Endothelial cell of umbilical vein (primary cell): ENCODE measurements at regions of chr9 and their contacts with region 1.

Region 1: GRCh38 chr9:22469928-22470544 is 23.4 kb downstream of the DMRTA1 start:
- DNase-seq: peak; percentile 58
- H3K4me3 ChIP-seq: no peak overlapping the region
- H3K27ac ChIP-seq: no peak overlapping the region
- H3K4me1 ChIP-seq: no peaks in the 10 kb centered on the region
- H3K27me3 ChIP-seq: peaks cover 0 to 10% of the 10 kb centered on the region in 2 experiments
- CTCF ChIP-seq: peak; percentile 65 to 69
- POLR2A ChIP-seq: no peak

Region 2: GRCh38 chr9:22079873-22080341 is 390.1 kb before region 1 on chr9:
- CTCF ChIA-PET with region 1: no interaction called
- POLR2A ChIA-PET with region 1: no interaction called
- dilution Hi-C with region 1: no loop called
- intact Hi-C with region 1: no loop called
- DNase-seq: no peak
- H3K4me3 ChIP-seq: no peak overlapping the region
- H3K27ac ChIP-seq: no peak overlapping the region
- H3K4me1 ChIP-seq: peaks cover 7% of the 10 kb centered on the region
- H3K27me3 ChIP-seq: no peaks in the 10 kb centered on the region
- CTCF ChIP-seq: no peak
- POLR2A ChIP-seq: no peak

Region 3: GRCh38 chr9:22278426-22278825 is 191.6 kb before region 1 on chr9:
- CTCF ChIA-PET with region 1: no interaction called
- POLR2A ChIA-PET with region 1: no interaction called
- dilution Hi-C with region 1: no loop called
- intact Hi-C with region 1: no loop called
- DNase-seq: no peak
- H3K4me3 ChIP-seq: no peak overlapping the region
- H3K27ac ChIP-seq: no peak overlapping the region
- H3K4me1 ChIP-seq: no peaks in the 10 kb centered on the region
- H3K27me3 ChIP-seq: no peaks in the 10 kb centered on the region
- CTCF ChIP-seq: no peak
- POLR2A ChIP-seq: no peak

Region 4: DNA sequence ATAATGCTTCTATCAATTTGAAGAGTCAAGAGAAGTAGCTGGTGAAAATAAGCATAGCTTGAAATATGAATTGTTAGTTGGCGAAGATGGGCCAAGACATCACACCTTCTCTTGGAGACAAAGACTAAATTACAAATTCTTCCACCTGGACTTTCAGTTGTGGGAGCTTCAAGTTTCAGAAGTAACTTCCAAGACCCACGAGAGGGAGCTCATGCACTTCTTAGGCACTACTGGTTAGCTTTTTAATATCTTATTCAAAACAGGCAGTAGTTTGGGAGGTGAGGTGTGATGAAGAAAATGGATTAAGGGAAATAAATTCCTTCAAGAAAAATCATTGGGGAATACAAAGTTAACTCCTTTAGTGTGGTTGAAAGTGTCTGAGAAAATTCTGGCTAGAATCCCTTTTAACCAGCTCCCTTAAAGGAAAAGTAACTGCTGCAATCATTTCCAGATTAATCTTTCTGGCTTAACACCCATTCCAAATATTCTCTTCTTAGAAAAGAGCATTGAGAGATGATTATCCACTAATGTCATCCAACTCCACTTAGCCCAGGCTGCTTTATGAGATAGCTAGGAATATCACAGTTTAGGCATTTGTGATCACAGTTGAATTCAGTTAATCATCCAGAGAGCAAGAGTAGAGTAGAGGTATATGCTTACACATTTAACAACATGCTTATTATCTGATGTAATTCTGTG is 162.9 kb before region 1 on chr9:
- CTCF ChIA-PET with region 1: interaction called, 42 read pairs
- POLR2A ChIA-PET with region 1: no interaction called
- dilution Hi-C with region 1: no loop called
- intact Hi-C with region 1: no loop called
- DNase-seq: peak; percentile 54
- H3K4me3 ChIP-seq: no peak overlapping the region
- H3K27ac ChIP-seq: no peak overlapping the region
- H3K4me1 ChIP-seq: no peaks in the 10 kb centered on the region
- H3K27me3 ChIP-seq: peaks cover 0 to 5% of the 10 kb centered on the region in 2 experiments
- CTCF ChIP-seq: peak; percentile 48 to 59
- POLR2A ChIP-seq: no peak

Region 5: GRCh38 chr9:22483528-22484070 is 13.6 kb after region 1 on chr9:
- CTCF ChIA-PET with region 1: interaction called, 17 read pairs
- POLR2A ChIA-PET with region 1: no interaction called
- dilution Hi-C with region 1: no loop called
- intact Hi-C with region 1: no loop called
- DNase-seq: no peak
- H3K4me3 ChIP-seq: no peak overlapping the region
- H3K27ac ChIP-seq: no peak overlapping the region
- H3K4me1 ChIP-seq: no peaks in the 10 kb centered on the region
- H3K27me3 ChIP-seq: no peaks in the 10 kb centered on the region
- CTCF ChIP-seq: no peak
- POLR2A ChIP-seq: no peak

Region 6: DNA sequence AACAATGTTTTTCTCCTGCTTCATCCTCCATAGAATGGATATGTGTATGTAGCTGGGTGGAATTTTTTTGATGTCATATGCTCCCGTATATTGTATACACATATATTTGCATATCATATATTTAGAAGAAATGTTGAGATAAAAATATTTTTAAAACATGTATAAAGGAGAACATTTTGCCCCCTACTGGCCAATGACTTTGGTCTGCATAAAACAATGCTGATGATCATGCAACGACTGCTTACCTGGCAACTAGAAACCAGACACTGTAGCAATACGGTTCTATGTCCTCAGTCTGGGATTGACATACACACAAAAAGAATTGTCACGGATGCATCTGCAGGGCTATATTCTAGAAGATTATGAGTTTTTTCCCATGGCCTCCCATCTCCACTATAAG is 852.4 kb after region 1 on chr9:
- CTCF ChIA-PET with region 1: interaction called, 14 read pairs
- POLR2A ChIA-PET with region 1: no interaction called
- dilution Hi-C with region 1: no loop called
- intact Hi-C with region 1: loop called (anchors 2 kb)
- DNase-seq: no peak
- H3K4me3 ChIP-seq: no peak overlapping the region
- H3K27ac ChIP-seq: no peak overlapping the region
- H3K4me1 ChIP-seq: no peaks in the 10 kb centered on the region
- H3K27me3 ChIP-seq: no peaks in the 10 kb centered on the region
- CTCF ChIP-seq: peak; percentile 20 to 26
- POLR2A ChIP-seq: no peak

Region 7: GRCh38 chr9:23492126-23493002 is 1022.3 kb after region 1 on chr9:
- CTCF ChIA-PET with region 1: interaction called, 10 read pairs
- POLR2A ChIA-PET with region 1: no interaction called
- dilution Hi-C with region 1: no loop called
- intact Hi-C with region 1: loop called (anchors 5 kb)
- DNase-seq: peak; percentile 64
- H3K4me3 ChIP-seq: no peak overlapping the region
- H3K27ac ChIP-seq: no peak overlapping the region
- H3K4me1 ChIP-seq: no peaks in the 10 kb centered on the region
- H3K27me3 ChIP-seq: no peaks in the 10 kb centered on the region
- CTCF ChIP-seq: peak; percentile 45 to 55
- POLR2A ChIP-seq: no peak

Region 8: DNA sequence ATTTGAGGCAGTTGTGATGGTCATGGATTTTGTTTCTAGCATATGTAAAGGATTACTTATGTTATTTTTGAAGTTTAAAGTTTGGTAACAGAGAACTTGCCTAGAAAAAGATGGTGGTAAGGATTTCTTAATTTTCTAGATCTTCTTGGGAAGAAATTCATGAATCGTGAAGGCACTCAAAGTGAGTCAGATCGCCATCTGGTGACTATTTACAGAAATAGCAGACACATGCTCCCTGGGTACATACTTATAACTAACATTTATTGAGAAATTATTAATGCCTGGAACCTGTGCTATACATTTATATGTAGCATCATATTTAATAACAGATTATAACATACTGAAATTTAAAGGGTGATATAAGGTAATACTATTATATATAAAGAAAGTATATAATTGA is 1776.0 kb after region 1 on chr9:
- CTCF ChIA-PET with region 1: interaction called, 4 read pairs
- POLR2A ChIA-PET with region 1: no interaction called
- dilution Hi-C with region 1: no loop called
- intact Hi-C with region 1: loop called (anchors 5 kb)
- DNase-seq: no peak
- H3K4me3 ChIP-seq: no peak overlapping the region
- H3K27ac ChIP-seq: no peak overlapping the region
- H3K4me1 ChIP-seq: no peaks in the 10 kb centered on the region
- H3K27me3 ChIP-seq: no peaks in the 10 kb centered on the region
- CTCF ChIP-seq: peak in 1 of 2 donors; percentile 3
- POLR2A ChIP-seq: no peak